ENCODE measurements at regions of chr11 and their contacts with region 1.

Region 1: DNA sequence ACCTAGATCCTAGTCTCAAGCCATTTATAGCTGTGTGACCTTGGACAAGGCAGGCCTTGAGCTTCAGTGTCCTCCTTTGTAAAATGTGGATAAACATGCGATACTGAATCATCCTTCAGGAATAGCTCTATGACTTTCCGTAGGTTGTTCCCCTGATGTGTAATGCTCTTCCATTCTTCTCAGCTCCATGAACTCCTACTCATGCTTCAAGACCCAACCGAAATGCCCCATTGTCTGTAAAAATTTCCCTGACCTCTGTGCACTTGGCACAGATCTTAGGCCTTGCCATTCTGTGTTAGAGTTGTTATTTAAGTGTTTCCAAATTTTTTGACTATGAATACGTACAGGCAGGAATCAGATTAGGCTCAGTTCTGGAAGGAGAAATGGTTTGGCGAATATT is 3.3 kb upstream of the BEST1 start:
- DNase-seq: no peak
- ATAC-seq: no peak
- H3K4me3 Mint-ChIP-seq: no peak overlapping the region
- H3K27ac Mint-ChIP-seq: no peak overlapping the region
- H3K4me1 Mint-ChIP-seq: no peaks in the 10 kb centered on the region
- H3K27me3 Mint-ChIP-seq: peaks cover 10% of the 10 kb centered on the region

Region 2: DNA sequence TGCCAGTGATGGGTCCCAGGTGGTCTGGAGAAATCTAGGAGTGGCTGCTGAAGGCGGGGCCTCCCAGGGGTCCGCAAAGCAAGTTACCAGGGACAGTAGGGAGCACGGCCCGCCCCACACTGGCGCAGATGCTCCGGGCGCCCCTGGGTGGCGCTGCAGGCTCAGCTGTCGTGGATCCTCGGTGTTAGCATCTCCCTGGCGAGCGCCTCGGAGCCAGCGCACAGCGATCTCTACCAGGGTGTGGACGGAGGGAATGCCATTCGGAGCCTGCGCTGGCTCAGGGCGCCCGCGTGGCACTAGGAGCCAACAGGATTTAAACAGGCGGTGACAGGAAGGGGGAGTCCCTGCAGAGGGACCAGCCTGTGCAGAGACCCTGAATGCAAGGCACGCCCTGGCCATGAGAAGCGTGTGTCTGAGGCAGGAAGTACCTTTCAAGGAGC is 75.7 kb before region 1 on chr11:
- POLR2A ChIA-PET with region 1: interaction called, 10 read pairs
- DNase-seq: peak; percentile 84
- ATAC-seq: peak; percentile 91
- H3K4me3 Mint-ChIP-seq: peak overlapping the region; percentile 80
- H3K27ac Mint-ChIP-seq: no peak overlapping the region
- H3K4me1 Mint-ChIP-seq: peaks cover 6% of the 10 kb centered on the region
- H3K27me3 Mint-ChIP-seq: no peaks in the 10 kb centered on the region